GM10248 (cell line): ENCODE measurements at regions of chrX and their contacts with region 1.

Region 1: GRCh38 chrX:115330498-115331168 is 41.1 kb downstream of the LUZP4 start:
- DNase-seq: peak; percentile 55
- CTCF ChIP-seq: peak; percentile 42

Region 2: DNA sequence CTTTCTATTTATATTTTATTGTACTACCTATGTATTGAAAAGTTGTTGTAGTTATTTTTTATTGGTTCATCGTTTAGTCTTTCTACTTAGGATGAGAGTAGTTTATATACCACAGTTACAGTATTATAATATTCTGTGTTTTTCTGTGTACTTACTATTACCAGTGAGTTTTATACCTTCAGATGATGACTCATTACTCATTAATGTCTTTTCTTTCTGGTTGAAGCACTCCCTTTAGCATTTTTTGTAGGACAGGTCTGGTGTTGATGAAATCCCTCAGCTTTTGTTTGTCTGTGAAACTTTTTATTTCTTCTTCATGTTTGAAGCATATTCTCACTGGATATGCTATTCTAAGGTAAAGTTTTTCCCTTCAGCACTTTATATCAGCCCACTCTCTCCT is 33.4 kb before region 1 on chrX:
- CTCF ChIA-PET with region 1: no interaction called
- POLR2A ChIA-PET with region 1: no interaction called
- DNase-seq: no peak
- CTCF ChIP-seq: no peak

Region 3: DNA sequence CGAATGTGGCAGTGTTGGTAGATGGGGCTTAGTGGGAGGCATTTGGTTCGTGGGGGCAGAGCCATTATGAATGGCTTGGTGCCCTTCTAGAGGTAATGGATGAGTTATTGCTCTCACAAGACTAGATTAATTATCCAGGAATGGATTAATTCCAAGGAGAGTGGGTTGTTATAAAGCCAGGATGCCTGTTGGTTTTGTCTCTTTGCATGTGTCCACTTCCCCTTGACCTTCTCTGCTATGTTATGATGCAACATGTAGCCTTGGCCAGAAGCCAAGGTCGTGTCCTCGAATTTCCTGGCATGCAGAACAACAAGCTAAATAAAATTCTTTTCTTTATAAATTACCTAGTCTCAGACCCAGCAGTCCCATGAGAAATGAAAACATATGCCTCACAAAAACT is 119.1 kb after region 1 on chrX:
- CTCF ChIA-PET with region 1: no interaction called
- POLR2A ChIA-PET with region 1: no interaction called
- DNase-seq: no peak
- CTCF ChIP-seq: no peak

Region 4: DNA sequence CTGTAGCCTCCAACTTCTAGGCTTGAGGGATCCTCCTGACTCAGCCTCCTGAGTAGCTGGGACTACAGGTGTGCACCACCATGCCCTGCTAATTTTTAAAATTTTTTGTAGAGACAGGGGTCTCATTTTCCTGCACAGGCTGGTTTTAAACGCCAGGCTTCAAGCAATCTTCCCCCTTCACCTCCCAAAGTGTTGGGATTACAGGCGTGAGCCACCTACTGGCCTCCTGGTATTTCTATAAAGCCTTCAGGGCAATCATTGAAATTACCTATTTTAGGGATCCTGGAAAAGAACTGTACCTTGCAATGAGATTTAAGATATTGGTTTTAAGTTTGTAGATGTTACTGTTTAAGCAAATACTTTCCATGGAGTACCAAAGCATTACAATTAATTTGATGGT is 216.8 kb after region 1 on chrX:
- CTCF ChIA-PET with region 1: no interaction called
- POLR2A ChIA-PET with region 1: no interaction called
- DNase-seq: no peak
- CTCF ChIP-seq: no peak

Region 5: GRCh38 chrX:115560978-115561604 is 230.5 kb after region 1 on chrX and contains the start of gene PLS3:
- CTCF ChIA-PET with region 1: no interaction called
- POLR2A ChIA-PET with region 1: no interaction called
- DNase-seq: peak; percentile 55
- CTCF ChIP-seq: no peak

Region 6: GRCh38 chrX:115642895-115643530 is 312.4 kb after region 1 on chrX:
- CTCF ChIA-PET with region 1: interaction called, 53 read pairs
- POLR2A ChIA-PET with region 1: no interaction called
- DNase-seq: peak; percentile 35
- CTCF ChIP-seq: peak; percentile 51

Region 7: GRCh38 chrX:115690511-115691216 is 360.0 kb after region 1 on chrX:
- CTCF ChIA-PET with region 1: interaction called, 14 read pairs
- POLR2A ChIA-PET with region 1: no interaction called
- DNase-seq: peak; percentile 59
- CTCF ChIP-seq: peak; percentile 40